Motor neuron (in vitro differentiated cells): ENCODE measurements at regions of chr10 and their contacts with region 1.

Region 1: DNA sequence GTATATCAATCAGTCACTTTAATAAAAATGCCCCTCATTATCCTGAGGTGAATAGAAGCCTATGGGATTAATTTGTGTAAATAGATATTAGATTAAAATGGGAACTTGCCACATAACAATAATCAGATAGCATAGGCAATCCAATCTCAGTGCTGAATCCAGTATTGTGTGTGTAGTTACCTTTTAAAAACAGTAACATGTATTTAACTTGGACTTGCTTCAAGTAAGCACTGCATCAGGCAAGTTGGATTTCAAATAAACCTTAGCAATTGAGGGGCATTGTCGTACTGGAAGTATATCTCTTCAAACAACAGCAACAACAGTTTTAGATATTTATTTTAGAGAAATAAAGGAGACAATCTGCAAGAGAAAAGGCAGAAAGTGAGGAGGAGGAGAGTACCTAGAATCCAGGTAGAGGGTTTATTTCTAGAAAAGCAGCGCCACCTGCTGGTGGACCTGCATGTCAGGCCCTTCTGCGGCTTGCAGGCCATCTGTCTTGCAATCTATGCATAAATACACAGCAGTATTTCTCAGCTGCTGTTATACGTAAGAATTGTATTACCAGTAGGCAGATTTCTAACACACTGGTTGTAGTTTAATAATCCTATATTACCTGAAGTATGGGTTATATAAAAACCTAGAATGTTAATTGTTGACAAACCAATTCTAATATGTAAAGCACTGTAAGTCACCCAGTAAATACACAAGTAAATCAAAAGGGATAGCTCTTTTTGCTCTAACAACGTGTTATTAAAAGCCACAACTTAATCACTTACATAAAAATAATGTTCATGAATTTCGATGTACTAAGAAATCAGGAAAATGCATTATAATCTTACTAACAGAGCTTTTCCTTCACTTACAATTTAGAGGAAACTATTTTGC is 652.8 kb downstream of the KCNMA1 start:
- ATAC-seq: peak; percentile 82 to 97 (median 90)
- H3K4me3 ChIP-seq: no peak overlapping the region
- H3K27ac ChIP-seq: no peak overlapping the region
- H3K4me1 ChIP-seq: peaks cover 2 to 7% of the 10 kb centered on the region in 2 donors

Region 2: DNA sequence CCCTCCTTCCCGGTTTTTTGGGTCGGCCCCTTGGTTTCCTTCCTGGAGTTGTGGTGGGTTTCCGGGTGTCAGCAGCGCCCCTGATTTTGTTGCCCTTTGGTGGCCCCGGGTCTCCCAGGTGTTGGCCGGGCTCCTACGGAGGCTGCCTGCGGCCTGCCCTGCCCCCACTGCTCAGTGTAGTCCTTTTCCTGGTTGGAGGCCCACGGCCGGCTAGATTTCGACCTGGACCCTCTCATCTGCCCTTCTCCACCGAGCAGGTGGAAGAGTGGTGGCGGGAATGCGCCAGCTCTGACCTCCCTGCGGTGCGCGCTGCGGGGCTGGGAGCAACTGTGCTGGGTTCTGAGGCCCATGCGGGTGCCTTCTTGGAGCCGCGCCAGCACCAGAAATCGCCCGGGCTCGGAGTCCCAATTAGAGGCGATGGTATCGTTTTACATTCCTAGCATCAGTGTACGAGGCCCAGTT is 1708.4 kb before region 1 on chr10:
- in situ Hi-C with region 1: no loop called
- ATAC-seq: no peak
- H3K4me3 ChIP-seq: no peak overlapping the region
- H3K27ac ChIP-seq: no peak overlapping the region
- H3K4me1 ChIP-seq: no peaks in the 10 kb centered on the region

Region 3: DNA sequence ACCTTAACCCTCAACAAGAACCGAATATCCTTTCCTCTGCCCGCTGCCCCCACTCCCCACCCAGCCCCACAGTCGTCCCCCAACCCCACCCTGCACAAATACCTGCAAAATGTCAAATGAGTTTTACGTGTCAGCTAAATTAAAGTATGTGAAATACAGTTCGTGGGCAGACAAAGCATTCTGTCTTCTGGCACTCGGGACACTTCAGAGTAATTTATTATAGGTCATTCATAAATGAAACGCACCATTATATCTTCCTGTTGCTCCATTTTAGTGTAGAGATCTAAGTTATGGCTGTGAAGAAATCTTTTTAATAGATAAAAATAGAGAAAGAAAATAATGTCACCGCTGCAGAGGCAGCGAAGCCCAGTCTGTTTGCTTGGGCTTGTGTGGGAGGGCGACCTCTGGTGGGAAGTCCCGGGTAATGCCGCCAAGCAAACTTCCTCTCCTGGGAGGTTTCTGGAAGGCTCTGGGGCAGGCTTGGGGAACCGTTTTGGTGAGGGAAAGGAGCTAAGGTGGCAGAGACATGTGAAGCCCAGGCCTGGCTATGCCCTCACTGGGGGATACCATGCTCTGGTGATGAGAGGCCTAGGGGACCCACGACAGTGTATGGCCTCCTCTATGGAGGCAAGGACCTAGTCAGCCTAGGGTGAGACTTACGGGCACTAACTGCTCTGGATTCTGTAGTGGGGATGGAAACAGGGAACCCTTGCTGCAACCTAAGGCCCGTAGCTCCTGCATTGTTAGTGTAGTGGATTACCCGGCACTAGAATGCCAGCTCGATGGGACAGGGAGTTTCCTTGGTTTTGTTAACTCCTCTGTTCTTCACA is 948.5 kb before region 1 on chr10:
- in situ Hi-C with region 1: loop called in 1 of 9 experiments (anchors 25 kb)
- ATAC-seq: peak; percentile 46 to 93 (median 62)
- H3K4me3 ChIP-seq: peak overlapping the region in 3 of 5 donors; percentile 0 to 9 (median 9)
- H3K27ac ChIP-seq: peak overlapping the region; percentile 56 to 65
- H3K4me1 ChIP-seq: peaks cover 43% of the 10 kb centered on the region in 2 donors

Region 4: GRCh38 chr10:76657337-76658012 is 327.3 kb before region 1 on chr10:
- in situ Hi-C with region 1: no loop called
- ATAC-seq: no peak
- H3K4me3 ChIP-seq: no peak overlapping the region
- H3K27ac ChIP-seq: no peak overlapping the region
- H3K4me1 ChIP-seq: no peaks in the 10 kb centered on the region